ENCODE measurements at regions of chr7 and their contacts with region 1.

Region 1: GRCh38 chr7:99910976-99911375 is 8.4 kb downstream of the TRIM4 start:
- DNase-seq: no peak

Region 2: DNA sequence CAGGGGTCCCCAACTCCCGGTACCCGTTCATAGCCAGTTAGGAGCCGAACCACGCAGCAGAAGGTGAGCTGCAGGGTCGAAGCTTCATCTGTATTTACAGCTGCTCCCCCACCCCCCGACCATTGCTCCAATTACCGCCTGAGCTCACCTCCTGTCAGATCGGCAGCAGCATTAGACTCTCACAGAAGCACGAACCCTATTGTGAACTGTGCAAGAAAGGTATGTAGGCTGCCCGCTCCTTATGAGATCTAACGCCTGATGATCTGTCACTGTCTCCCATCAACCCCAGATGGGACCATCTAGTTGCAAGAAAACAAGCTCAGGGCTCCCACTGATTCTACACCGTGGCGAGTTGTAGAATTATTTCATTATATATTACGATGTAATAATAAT is 79.5 kb after region 1 on chr7:
- intact Hi-C with region 1: loop called (anchors 2 kb)
- DNase-seq: no peak